ENCODE measurements at regions of chr18 and their contacts with region 1.

Region 1: GRCh38 chr18:9951022-9951859 is 37.4 kb downstream of the VAPA start:
- DNase-seq: peak; percentile 22 to 46
- H3K4me3 ChIP-seq: no peak overlapping the region
- H3K27ac ChIP-seq: 0 out of 2 replicates have a peak overlapping the region, but pooled peaks have one; percentile 20
- H3K4me1 ChIP-seq: no peaks in the 10 kb centered on the region; the same call in 1 of the 2 replicates
- H3K27me3 ChIP-seq: no peaks in the 10 kb centered on the region
- CTCF ChIP-seq: peak; percentile 73

Region 2: GRCh38 chr18:9708057-9708433 is 243.2 kb before region 1 on chr18 and contains the start of gene RAB31:
- CTCF ChIA-PET with region 1: no interaction called
- POLR2A ChIA-PET with region 1: no interaction called
- intact Hi-C with region 1: loop called (anchors 5 kb)
- DNase-seq: peak in 1 of 2 experiments; percentile 76
- H3K4me3 ChIP-seq: peak within 1 kb of the TSS; percentile 83
- H3K27ac ChIP-seq: peak within 1 kb of the TSS; percentile 2; the same call in 1 of the 2 replicates
- H3K4me1 ChIP-seq: peaks cover 43% of the 10 kb centered on the region
- H3K27me3 ChIP-seq: no peaks in the 10 kb centered on the region
- CTCF ChIP-seq: no peak
- total RNA-seq, gene RAB31: 48.6 and 51.0 TPM in 2 replicates

Region 3: GRCh38 chr18:10113121-10114022 is 162.1 kb after region 1 on chr18:
- CTCF ChIA-PET with region 1: no interaction called
- POLR2A ChIA-PET with region 1: no interaction called
- intact Hi-C with region 1: no loop called
- DNase-seq: no peak
- H3K4me3 ChIP-seq: no peak overlapping the region
- H3K27ac ChIP-seq: no peak overlapping the region
- H3K4me1 ChIP-seq: peaks cover 18% of the 10 kb centered on the region
- H3K27me3 ChIP-seq: no peaks in the 10 kb centered on the region
- CTCF ChIP-seq: no peak

Region 4: DNA sequence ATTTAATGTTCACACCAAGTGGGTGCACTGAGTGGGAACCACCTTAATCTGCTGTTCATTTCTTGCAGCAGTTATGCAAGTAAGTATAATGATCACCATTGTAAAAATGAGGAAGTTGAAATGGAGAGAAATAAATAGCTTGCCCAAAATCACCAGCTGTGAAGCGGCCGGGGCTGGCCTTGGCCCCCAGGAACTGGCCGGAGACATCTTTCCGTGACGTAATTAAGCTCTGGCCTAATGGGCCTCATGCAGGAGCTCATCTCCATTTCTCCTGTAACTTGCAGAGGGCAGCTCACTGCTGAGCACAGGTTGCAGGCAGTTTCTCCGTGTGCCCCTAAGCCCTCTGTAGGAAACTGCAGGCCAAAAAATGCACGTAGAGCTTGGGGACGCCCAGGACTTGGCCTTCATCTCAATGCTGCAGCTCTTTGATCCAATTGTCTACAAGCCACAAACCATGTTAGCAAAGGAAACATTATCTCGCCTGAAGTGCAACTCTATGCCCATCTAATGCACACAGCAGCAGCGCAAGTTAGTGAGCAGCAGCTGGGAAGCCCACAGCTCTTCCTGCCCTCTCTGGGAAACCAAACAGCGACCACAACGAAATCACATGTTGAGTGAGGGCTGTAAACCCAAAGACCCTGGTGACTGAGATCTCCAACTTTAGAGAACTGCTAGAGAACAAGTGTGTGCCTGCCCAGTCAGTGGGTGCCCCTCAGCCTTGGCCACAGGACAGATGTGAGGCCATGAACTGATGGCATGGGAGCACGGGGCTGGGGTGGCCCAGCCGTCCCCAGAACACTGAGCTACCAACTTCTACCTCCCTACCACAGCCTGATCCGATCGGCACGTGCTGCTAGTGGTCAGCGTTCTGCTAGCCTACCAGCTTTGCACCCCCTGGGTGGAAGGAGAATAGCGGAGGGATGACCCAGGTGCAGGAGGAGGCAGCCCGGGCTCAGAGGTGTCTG is 532.0 kb after region 1 on chr18:
- CTCF ChIA-PET with region 1: no interaction called
- POLR2A ChIA-PET with region 1: no interaction called
- intact Hi-C with region 1: no loop called
- DNase-seq: no peak
- H3K4me3 ChIP-seq: no peak overlapping the region
- H3K27ac ChIP-seq: no peak overlapping the region
- H3K4me1 ChIP-seq: no peaks in the 10 kb centered on the region
- H3K27me3 ChIP-seq: no peaks in the 10 kb centered on the region
- CTCF ChIP-seq: no peak